Activated CD4-positive, alpha-beta memory T cell treated with anti-CD3 and anti-CD28 coated beads, Interleukin-2, amount 10 ng/mL, durations not matched to agents 7 days and 5 days (primary cell): ENCODE measurements at regions of chr14 and their contacts with region 1.

Region 1: GRCh38 chr14:49620182-49621113 is at the starts of genes MGAT2 and RPL36AL:
- DNase-seq: peak; percentile 96
- H3K4me3 Mint-ChIP-seq: peak within 1 kb of the TSS; percentile 94
- H3K27ac Mint-ChIP-seq: peak within 1 kb of the TSS; percentile 94
- H3K4me1 Mint-ChIP-seq: peaks cover 50% of the 10 kb centered on the region
- H3K27me3 Mint-ChIP-seq: no peaks in the 10 kb centered on the region
- total RNA-seq, gene MGAT2: 82.7 to 86.5 TPM
- total RNA-seq, gene RPL36AL: 320 to 330 TPM

Region 2: DNA sequence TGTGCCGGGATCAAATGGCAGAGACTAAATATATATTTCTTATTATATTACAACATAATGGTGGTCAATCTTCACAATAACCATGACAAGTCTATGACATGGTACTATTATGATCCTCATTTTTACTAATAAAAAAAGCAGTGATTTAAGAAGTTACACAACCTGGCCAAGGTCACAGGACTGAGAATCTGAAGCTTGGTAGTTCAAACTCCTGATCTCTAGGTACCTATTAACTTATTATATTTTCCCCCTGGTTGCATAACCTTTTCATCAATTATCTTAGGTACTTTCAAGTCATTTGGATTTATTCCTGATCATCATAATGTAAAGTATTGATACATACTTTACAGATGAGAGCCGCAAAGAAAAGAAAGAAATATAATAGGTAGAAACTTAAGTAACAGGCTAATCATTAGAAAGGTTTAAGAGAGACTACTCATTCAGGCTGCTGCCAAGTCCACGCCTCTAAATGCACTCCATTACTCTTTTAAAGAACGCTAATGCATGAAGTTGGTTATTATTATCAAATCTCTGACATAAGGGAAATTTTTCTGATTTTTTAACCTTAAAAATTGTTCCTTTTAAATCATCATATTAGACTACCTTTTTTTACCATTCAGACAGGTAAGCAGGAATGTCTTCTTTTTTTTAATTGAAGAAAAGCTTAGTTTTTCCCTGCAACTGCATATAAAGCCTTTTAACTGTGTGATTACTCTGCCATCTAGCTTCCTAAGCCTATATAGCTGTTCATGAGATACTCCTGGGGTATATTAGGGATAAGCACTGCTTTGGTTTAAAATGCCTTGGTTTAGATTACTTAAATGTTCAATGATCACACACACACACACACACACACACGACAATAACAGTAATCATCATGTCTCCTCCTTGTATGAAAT is 69.9 kb before region 1 on chr14:
- CTCF ChIA-PET with region 1: no interaction called
- POLR2A ChIA-PET with region 1: no interaction called
- DNase-seq: no peak
- H3K4me3 Mint-ChIP-seq: no peak overlapping the region
- H3K27ac Mint-ChIP-seq: no peak overlapping the region
- H3K4me1 Mint-ChIP-seq: no peaks in the 10 kb centered on the region
- H3K27me3 Mint-ChIP-seq: no peaks in the 10 kb centered on the region

Region 3: GRCh38 chr14:49598485-49599300 is 21.8 kb before region 1 on chr14 and contains the start of gene LRR1:
- CTCF ChIA-PET with region 1: interaction called, 30 read pairs
- POLR2A ChIA-PET with region 1: interaction called, 291 read pairs
- DNase-seq: peak; percentile 88
- H3K4me3 Mint-ChIP-seq: peak within 1 kb of the TSS; percentile 95
- H3K27ac Mint-ChIP-seq: peak within 1 kb of the TSS; percentile 95
- H3K4me1 Mint-ChIP-seq: peaks cover 47% of the 10 kb centered on the region
- H3K27me3 Mint-ChIP-seq: no peaks in the 10 kb centered on the region
- total RNA-seq, gene LRR1: 48.7 to 53.2 TPM

Region 4: GRCh38 chr14:49692811-49693734 is 72.6 kb after region 1 on chr14 and contains the start of gene KLHDC1:
- CTCF ChIA-PET with region 1: interaction called, 4 read pairs
- POLR2A ChIA-PET with region 1: interaction called, 32 read pairs
- DNase-seq: peak; percentile 77
- H3K4me3 Mint-ChIP-seq: peak within 1 kb of the TSS; percentile 72
- H3K27ac Mint-ChIP-seq: peak within 1 kb of the TSS; percentile 66
- H3K4me1 Mint-ChIP-seq: peaks cover 38% of the 10 kb centered on the region
- H3K27me3 Mint-ChIP-seq: no peaks in the 10 kb centered on the region
- total RNA-seq, gene KLHDC1: 2.4 to 2.6 TPM